ENCODE measurements at regions of chr21 and their contacts with region 1.

Region 1: GRCh38 chr21:33924079-33924765 is 8.6 kb upstream of the ATP5PO start:
- DNase-seq: peak; percentile 82 to 98 (median 93)

Region 2: DNA sequence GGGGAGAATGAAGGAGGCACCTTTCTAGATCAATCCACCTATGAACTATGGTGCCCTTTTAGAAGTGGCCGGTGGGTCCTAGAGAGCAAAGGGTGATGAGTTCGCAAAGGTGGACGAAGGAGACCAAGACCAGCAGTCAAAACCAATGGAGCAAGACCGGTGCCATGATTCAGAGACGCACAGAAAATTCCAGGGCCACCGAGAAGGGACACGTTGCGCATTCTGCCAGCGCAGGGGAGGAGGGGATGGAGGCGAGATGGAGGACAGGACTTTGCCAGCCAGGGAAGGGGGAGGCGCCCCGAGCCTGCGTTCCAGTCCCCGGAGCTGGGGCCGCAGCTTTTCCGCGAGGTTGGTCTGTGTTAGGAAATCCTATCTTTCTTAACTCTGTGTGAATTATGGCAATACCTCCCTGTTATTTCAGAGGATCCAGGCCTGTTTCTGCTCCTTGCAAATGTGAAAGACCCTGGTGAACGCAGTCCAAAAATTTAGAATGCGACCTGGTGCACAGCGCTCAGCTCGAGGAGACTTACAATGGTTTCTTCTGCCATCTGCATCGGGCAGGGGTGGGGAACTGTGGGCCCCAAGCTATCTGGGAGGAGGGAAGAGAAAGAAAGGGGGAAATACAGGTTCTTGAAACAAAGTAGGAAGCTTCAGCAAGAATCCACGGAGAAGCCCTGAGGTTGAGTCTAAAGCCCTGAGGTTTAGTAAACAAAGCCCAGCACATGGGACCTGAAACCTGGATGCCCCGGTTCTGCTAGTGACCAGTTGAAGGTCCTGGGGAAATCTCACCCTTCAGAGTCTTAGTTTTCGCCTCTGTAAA is 278.5 kb after region 1 on chr21:
- intact Hi-C with region 1: loop called (anchors 5 kb)
- DNase-seq: peak in 2 of 10 donors; percentile 30 to 79

Region 3: DNA sequence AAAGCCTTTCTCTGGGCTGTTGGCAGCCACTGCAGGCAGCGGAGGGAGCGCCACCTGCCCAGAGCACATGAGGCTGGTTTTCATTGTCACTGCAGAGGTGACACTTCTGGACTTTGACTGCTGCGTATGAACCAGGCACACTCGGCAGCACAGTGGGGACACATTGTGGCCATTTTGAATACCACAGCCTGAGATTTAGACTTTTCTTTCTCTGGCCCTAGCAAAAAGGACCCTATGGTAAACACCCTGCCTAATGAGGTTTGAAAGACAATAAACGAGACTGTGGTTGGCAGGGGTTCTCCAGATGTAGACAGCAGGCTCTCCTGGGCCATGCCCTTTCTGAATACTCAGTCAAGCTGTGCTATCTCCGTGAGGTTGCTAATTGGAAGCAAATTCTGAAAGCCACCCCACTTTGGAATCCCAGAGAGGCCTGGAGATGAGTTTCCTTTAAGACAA is 427.6 kb after region 1 on chr21:
- intact Hi-C with region 1: loop called (anchors 1 kb)
- DNase-seq: peak; percentile 31 to 95 (median 62)

Measured in posterior cingulate gyrus (tissue), 11 donors.